ENCODE measurements at regions of chr3 and their contacts with region 1.

Region 1: DNA sequence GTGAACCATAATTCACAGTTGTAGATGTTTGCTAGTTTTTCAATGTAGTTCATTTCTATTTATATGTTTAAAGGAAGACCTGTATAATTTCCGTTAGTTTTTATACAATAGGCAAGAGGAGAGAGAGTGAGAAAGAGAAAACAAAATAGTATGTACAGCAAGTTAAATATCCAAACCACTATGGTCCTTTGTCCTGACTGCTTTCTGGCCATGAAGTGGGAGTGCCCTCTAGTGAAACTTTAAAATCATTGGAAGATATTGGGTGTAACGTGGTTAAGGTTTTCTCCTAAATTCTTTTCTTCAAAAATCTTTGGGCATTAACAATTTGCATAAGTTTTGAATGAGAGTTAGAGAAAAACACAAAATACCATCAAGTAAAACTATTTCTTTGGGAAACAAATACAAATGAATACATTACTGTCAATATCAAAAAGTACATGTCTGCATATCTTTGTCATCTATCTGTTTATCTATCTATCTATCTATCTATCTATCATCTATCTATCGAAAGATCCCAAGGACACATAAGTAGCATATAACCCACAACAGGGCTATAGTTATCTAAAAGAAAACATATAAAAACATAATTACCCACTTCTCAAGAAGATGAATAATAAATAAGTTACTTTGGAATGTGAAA is 534.6 kb upstream of the ATP11B start:
- DNase-seq: peak; percentile 66
- ATAC-seq: peak; percentile 75
- H3K4me3 ChIP-seq: no peak overlapping the region
- H3K27ac ChIP-seq: no peak overlapping the region
- H3K4me1 ChIP-seq: no peaks in the 10 kb centered on the region
- H3K27me3 ChIP-seq: no peaks in the 10 kb centered on the region
- CTCF ChIP-seq: peak; percentile 87

Region 2: GRCh38 chr3:181948286-181948685 is 310.4 kb before region 1 on chr3:
- CTCF ChIA-PET with region 1: no interaction called
- POLR2A ChIA-PET with region 1: no interaction called
- intact Hi-C with region 1: loop called (anchors 1 kb)
- DNase-seq: peak; percentile 48
- ATAC-seq: peak; percentile 31; the same call in 1 of the 2 replicates
- H3K4me3 ChIP-seq: no peak overlapping the region
- H3K27ac ChIP-seq: no peak overlapping the region
- H3K4me1 ChIP-seq: no peaks in the 10 kb centered on the region
- H3K27me3 ChIP-seq: peaks cover 4% of the 10 kb centered on the region; the same call in 1 of the 2 replicates
- CTCF ChIP-seq: peak; percentile 69

Region 3: DNA sequence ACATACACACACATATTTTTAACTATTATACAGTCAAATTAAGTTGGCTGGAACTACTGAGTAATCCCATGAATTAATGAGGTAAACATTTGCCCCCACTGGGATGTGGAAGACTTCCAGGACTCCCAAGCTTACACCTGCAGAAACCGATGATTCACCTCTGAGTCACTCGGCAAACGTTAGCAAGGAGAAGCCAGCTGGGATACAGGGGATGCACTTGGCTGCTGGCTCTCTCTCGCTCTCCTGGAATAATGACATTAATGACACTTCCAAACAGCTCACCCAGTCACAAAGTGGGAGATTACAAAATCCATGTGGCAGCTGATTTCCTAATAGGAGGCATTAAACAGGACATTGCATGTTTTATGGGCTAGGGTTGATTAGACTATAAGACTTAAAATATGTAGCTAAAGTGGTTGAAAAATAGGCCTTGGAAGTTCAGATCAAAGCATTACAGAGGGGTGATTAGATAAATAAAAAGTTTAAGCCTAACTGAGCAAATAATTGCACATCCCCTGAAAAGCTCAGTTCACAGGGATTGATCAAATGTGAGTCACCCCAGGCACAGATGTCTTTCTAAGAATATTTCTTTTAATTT is 46.1 kb before region 1 on chr3:
- CTCF ChIA-PET with region 1: no interaction called
- POLR2A ChIA-PET with region 1: no interaction called
- intact Hi-C with region 1: loop called (anchors 2 kb)
- DNase-seq: peak; percentile 99
- ATAC-seq: peak; percentile 95
- H3K4me3 ChIP-seq: peak overlapping the region; percentile 10; the same call in 1 of the 2 replicates
- H3K27ac ChIP-seq: peak overlapping the region; percentile 89
- H3K4me1 ChIP-seq: peaks cover 26% of the 10 kb centered on the region
- H3K27me3 ChIP-seq: no peaks in the 10 kb centered on the region
- CTCF ChIP-seq: no peak

Region 4: DNA sequence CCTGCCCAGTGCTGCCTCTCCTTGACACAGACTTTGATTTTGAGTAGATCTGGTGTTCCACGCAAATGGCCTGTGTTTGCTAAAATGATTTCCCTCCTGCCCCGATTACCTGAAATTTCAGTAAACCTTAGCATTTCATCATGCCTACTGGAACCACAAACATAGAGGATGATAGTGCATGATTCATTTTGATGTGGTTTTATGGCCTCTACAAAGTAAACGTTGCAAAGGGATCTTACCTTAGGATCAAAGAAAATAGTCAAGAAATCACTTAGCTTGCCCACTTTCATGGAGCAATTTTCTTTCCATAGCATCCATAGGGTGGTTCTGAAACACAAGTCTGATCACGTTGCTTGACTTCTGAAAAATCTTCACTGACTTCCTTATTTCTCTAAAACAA is 10.1 kb after region 1 on chr3:
- CTCF ChIA-PET with region 1: no interaction called
- POLR2A ChIA-PET with region 1: no interaction called
- intact Hi-C with region 1: no loop called
- DNase-seq: peak; percentile 76
- ATAC-seq: peak; percentile 81
- H3K4me3 ChIP-seq: no peak overlapping the region
- H3K27ac ChIP-seq: no peak overlapping the region
- H3K4me1 ChIP-seq: peaks cover 11% of the 10 kb centered on the region
- H3K27me3 ChIP-seq: no peaks in the 10 kb centered on the region
- CTCF ChIP-seq: no peak

Region 5: GRCh38 chr3:182490596-182491491 is 232.2 kb after region 1 on chr3:
- CTCF ChIA-PET with region 1: no interaction called
- POLR2A ChIA-PET with region 1: no interaction called
- intact Hi-C with region 1: loop called (anchors 2 kb)
- DNase-seq: peak; percentile 66
- ATAC-seq: peak; percentile 71
- H3K4me3 ChIP-seq: no peak overlapping the region
- H3K27ac ChIP-seq: no peak overlapping the region
- H3K4me1 ChIP-seq: peaks cover 9% of the 10 kb centered on the region; the same call in 1 of the 2 replicates
- H3K27me3 ChIP-seq: no peaks in the 10 kb centered on the region
- CTCF ChIP-seq: peak; percentile 84